ENCODE measurements at regions of chr1 and their contacts with region 1.

Region 1: GRCh38 chr1:151539990-151540981 is at the start of gene TUFT1:
- DNase-seq: peak; percentile 97
- ATAC-seq: peak; percentile 77
- H3K4me3 ChIP-seq: peak within 1 kb of the TSS; percentile 81
- H3K27ac ChIP-seq: peak within 1 kb of the TSS; percentile 86
- H3K4me1 ChIP-seq: peaks cover 61% of the 10 kb centered on the region
- H3K27me3 ChIP-seq: no peaks in the 10 kb centered on the region
- CTCF ChIP-seq: no peak
- total RNA-seq, gene TUFT1: 33.9 and 46.9 TPM in 2 replicates

Region 2: DNA sequence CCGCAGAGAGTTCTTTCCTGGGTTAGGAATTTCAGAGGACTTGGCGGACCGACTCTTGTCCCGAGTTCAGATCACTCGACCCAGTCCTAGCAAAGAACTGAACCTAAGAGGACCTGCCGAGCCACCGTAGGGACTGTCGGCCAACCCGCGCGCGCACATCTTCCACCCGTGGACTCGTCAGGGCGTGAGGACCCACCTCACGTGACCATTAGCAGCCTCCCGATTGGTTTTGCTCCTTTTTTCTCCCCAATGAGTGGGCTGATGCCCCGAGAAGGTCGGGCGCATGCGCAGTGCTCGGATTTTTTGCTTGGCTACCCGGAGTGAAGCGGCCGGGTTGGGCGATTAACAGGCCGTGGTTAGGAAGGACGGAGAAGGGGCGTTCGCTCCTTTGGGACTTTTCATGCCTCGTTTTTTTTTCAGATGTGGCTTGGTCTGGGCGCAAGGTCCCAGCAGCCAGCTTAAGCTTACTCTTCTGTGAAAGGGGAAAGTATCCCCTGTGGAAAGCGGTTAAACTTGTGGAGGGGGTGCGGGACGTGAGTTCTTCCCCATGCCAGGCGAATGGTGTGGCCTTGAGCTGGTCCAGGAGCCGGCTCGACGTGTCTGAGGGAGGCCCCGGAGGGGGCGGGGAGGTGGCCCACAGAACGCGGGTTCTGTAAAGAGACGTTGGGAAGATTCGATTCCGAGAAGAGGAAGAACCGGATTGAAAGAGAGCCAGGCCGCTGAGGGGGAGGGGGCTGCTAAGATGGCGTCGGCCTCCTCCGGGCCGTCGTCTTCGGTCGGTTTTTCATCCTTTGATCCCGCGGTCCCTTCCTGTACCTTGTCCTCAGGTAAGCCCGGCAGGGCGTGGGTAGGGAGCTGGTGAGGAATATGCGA is 341.8 kb before region 1 on chr1 and contains the start of gene PIP5K1A:
- CTCF ChIA-PET with region 1: no interaction called
- POLR2A ChIA-PET with region 1: no interaction called
- intact Hi-C with region 1: loop called (anchors 10 kb)
- DNase-seq: peak; percentile 99
- ATAC-seq: peak; percentile 64
- H3K4me3 ChIP-seq: peak within 1 kb of the TSS; percentile 96
- H3K27ac ChIP-seq: peak within 1 kb of the TSS; percentile 83
- H3K4me1 ChIP-seq: peaks cover 37% of the 10 kb centered on the region
- H3K27me3 ChIP-seq: no peaks in the 10 kb centered on the region
- CTCF ChIP-seq: no peak
- total RNA-seq, gene PIP5K1A: 63.3 and 78.3 TPM in 2 replicates

Region 3: GRCh38 chr1:151267760-151268159 is 272.5 kb before region 1 on chr1:
- CTCF ChIA-PET with region 1: no interaction called
- POLR2A ChIA-PET with region 1: no interaction called
- intact Hi-C with region 1: no loop called
- DNase-seq: no peak
- ATAC-seq: no peak
- H3K4me3 ChIP-seq: no peak overlapping the region
- H3K27ac ChIP-seq: no peak overlapping the region
- H3K4me1 ChIP-seq: no peaks in the 10 kb centered on the region
- H3K27me3 ChIP-seq: no peaks in the 10 kb centered on the region
- CTCF ChIP-seq: no peak

Region 4: DNA sequence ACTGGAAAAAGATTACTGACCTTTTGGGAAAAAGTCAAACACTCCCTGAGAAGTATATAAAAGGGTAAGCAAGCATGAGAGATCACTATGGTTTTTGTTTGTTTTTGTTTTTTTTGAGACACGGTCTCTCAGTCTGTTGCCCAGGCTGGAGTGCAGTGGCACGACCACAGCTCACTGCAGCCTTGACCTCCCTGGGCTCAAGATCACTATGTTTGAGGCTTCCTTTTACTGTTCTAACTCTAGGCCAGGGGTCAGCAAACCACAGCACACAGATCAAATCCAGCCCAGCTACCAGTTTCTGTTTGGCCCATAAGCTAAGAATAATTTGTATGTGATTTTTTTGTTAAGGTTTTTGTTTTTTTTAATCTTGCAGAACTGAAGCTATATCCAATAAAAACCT is 115.2 kb before region 1 on chr1:
- CTCF ChIA-PET with region 1: no interaction called
- POLR2A ChIA-PET with region 1: no interaction called
- intact Hi-C with region 1: no loop called
- DNase-seq: no peak
- ATAC-seq: no peak
- H3K4me3 ChIP-seq: no peak overlapping the region
- H3K27ac ChIP-seq: no peak overlapping the region
- H3K4me1 ChIP-seq: no peaks in the 10 kb centered on the region
- H3K27me3 ChIP-seq: no peaks in the 10 kb centered on the region
- CTCF ChIP-seq: no peak

Region 5: GRCh38 chr1:151574545-151575529 is 34.6 kb after region 1 on chr1:
- CTCF ChIA-PET with region 1: no interaction called
- POLR2A ChIA-PET with region 1: interaction called, 5 read pairs
- intact Hi-C with region 1: loop called (anchors 2 kb)
- DNase-seq: peak; percentile 95
- ATAC-seq: peak; percentile 97
- H3K4me3 ChIP-seq: no peak overlapping the region
- H3K27ac ChIP-seq: peak overlapping the region; percentile 88
- H3K4me1 ChIP-seq: peaks cover 51% of the 10 kb centered on the region
- H3K27me3 ChIP-seq: no peaks in the 10 kb centered on the region
- CTCF ChIP-seq: no peak